ENCODE measurements at regions of chr9 and their contacts with region 1.

Region 1: DNA sequence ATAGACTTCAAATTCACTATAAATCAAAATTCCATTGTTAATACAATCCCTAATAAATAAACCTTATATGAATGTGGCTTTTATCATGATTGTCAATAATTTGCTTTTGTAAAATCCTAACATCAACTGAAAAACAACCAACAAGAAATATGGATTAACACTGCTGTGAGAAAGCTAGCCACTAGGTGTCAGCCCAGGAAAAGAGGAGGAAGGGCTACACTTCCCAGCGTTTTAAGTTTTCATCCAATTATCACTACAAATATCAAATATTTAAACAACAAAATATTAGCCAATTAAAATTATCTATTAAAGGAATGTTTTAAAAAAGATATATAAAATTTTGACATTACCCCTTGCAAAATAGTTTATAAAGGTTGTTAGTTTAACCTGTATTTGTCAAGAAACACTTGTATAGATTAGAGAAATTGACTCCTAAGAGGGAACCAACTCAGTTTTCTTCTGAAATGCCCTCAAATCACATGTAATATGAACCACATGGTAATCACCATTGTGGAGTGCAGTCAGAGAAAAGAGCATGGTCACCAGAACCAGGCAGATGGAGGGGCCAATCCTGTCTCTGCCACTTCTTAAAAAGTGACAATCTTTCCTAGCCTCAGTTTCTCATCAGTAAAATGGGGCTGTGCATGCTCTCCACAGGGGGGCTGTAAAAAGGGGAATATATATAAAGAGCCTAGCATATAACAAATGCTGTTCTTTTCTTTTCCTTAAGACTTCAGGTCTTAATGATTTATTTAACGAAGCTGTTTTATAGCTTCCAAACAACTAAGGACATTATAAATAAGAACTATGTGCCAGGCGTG is 188.2 kb downstream of the CRB2 start:
- DNase-seq: peak in 1 of 2 donors; percentile 65
- H3K4me3 ChIP-seq: no peak overlapping the region
- H3K27ac ChIP-seq: no peak overlapping the region
- H3K4me1 ChIP-seq: no peaks in the 10 kb centered on the region
- H3K27me3 ChIP-seq: no peaks in the 10 kb centered on the region
- CTCF ChIP-seq: peak in 5 of 7 experiments; percentile 62 to 81 (median 74)
- EP300 ChIP-seq: no peak
- POLR2A ChIP-seq: no peak

Region 2: DNA sequence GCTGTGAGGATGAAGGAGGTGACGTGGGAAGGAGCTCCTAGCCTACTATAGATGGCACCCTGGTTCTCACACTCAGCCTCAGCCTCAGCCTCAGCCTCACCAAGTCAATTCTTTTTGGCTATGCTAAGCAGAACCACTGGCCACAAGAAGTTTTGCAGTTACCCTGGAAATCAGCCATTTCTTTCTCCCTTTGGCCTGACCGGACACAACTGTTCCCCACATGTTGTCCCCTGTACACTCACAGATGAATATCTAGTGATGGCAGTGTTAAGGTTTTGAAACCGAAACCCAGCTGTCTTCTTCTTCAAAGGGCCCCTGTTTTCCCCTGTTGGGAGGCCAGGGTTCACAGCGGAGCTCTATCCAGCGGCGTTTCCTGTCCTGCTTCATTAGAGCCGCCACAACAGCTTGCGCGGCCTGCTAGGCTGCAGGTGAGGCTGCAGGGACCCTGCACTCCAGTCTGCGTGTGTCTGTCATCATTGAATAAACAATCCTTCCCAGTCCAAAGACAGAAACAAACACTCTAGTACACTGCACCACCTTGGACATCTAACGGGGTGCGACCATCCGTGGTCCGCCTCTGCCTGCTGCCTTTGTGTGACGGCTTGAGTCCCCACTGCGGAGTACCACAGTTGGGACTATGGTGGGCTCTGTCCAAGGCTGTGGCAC is 135.2 kb after region 1 on chr9:
- intact Hi-C with region 1: no loop called
- DNase-seq: peak in 1 of 2 donors; percentile 64
- H3K4me3 ChIP-seq: no peak overlapping the region
- H3K27ac ChIP-seq: peak overlapping the region in 2 of 5 donors; percentile 7 to 12
- H3K4me1 ChIP-seq: peaks cover 18 to 32% (median 24%) of the 10 kb centered on the region in 4 donors
- H3K27me3 ChIP-seq: no peaks in the 10 kb centered on the region
- CTCF ChIP-seq: no peak
- EP300 ChIP-seq: no peak
- POLR2A ChIP-seq: no peak

Region 3: GRCh38 chr9:124040935-124041816 is 497.0 kb after region 1 on chr9:
- intact Hi-C with region 1: loop called (anchors 5 kb)
- DNase-seq: peak; percentile 65 to 69
- H3K4me3 ChIP-seq: peak overlapping the region; percentile 37 to 50 (median 44)
- H3K27ac ChIP-seq: no peak overlapping the region
- H3K4me1 ChIP-seq: peaks cover 18 to 40% (median 29%) of the 10 kb centered on the region in 4 donors
- H3K27me3 ChIP-seq: peaks cover 0 to 98% (median 65%) of the 10 kb centered on the region in 3 donors
- CTCF ChIP-seq: peak in 6 of 7 experiments; percentile 10 to 98 (median 82)
- EP300 ChIP-seq: no peak
- POLR2A ChIP-seq: no peak